ENCODE measurements at regions of chr1 and their contacts with region 1.

Region 1: GRCh38 chr1:171485375-171486047 is at the start of gene PRRC2C:
- DNase-seq: peak; percentile 95
- H3K4me3 Mint-ChIP-seq: peak within 1 kb of the TSS; percentile 92
- H3K27ac Mint-ChIP-seq: peak within 1 kb of the TSS; percentile 99
- H3K4me1 Mint-ChIP-seq: peaks cover 48% of the 10 kb centered on the region
- H3K27me3 Mint-ChIP-seq: no peaks in the 10 kb centered on the region
- total RNA-seq, gene PRRC2C: 188 to 202 TPM

Region 2: DNA sequence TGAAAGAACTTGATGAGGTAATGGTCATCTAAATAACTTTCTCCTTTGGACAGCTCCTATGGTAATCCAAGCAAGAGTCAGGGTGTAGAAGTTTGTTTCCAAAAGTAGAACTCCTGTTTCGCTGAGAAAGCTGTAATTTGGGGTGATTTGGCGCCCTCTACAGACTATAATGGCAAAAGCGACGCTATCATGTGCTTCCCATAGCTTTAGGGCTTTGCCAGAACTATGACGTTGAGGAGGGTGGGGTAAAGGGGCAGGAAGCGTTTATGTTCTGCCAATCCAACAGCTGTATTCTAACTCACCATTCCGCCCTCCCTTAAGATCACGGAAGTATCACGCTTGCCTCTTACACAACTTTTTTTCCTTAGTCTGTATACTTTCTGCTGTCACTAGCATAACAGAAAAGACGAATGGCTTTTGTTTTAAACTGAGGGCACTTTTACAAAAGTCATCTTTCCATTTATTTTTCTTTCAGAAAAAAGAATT is 171.6 kb before region 1 on chr1 and contains the start of gene FMO4:
- CTCF ChIA-PET with region 1: interaction called, 15 read pairs
- POLR2A ChIA-PET with region 1: interaction called, 13 read pairs
- DNase-seq: peak; percentile 85
- H3K4me3 Mint-ChIP-seq: peak within 1 kb of the TSS; percentile 66
- H3K27ac Mint-ChIP-seq: peak within 1 kb of the TSS; percentile 40
- H3K4me1 Mint-ChIP-seq: peaks cover 16% of the 10 kb centered on the region
- H3K27me3 Mint-ChIP-seq: no peaks in the 10 kb centered on the region
- total RNA-seq, gene FMO4: 1.2 to 1.8 TPM

Region 3: DNA sequence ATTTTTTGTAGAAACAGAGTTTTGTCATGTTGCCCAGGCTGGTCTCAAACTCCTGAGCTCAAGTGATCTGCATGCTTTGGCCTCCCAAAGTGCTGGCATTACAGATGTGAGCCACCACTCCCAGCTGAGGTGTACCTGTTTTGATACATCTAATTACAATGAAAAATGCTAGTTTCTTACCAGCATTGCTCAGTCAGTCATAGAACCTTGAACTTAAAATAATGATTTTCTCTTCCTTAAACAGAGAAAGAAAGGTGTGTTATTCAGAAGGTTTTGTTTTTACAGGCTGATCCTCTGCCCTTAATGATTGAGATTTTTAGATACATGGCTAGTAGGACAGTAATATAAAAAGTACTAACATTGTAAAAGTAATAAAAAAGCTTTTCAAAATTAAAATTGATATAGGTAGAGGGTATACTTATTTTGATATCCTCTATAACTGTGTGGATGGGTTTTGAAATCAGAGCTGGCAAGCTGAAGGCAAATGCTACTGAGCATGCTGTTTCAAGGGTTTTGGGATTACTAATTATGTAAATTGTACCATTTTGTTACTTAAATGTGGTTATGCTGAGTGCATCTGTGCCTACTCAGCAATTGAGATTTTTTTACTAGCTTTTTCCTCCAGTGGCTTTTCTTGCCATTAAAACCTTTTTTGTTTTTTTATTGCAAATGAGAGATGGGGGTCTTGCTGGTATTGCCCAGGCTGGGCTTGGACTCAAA is 16.0 kb after region 1 on chr1:
- CTCF ChIA-PET with region 1: interaction called, 32 read pairs
- POLR2A ChIA-PET with region 1: interaction called, 22 read pairs
- DNase-seq: no peak
- H3K4me3 Mint-ChIP-seq: no peak overlapping the region
- H3K27ac Mint-ChIP-seq: peak overlapping the region; percentile 10
- H3K4me1 Mint-ChIP-seq: peaks cover 77% of the 10 kb centered on the region
- H3K27me3 Mint-ChIP-seq: no peaks in the 10 kb centered on the region

Region 4: GRCh38 chr1:171515299-171515698 is 29.8 kb after region 1 on chr1:
- CTCF ChIA-PET with region 1: interaction called, 28 read pairs
- POLR2A ChIA-PET with region 1: interaction called, 37 read pairs
- DNase-seq: no peak
- H3K4me3 Mint-ChIP-seq: no peak overlapping the region
- H3K27ac Mint-ChIP-seq: peak overlapping the region; percentile 44
- H3K4me1 Mint-ChIP-seq: peaks cover 63% of the 10 kb centered on the region
- H3K27me3 Mint-ChIP-seq: no peaks in the 10 kb centered on the region

Region 5: DNA sequence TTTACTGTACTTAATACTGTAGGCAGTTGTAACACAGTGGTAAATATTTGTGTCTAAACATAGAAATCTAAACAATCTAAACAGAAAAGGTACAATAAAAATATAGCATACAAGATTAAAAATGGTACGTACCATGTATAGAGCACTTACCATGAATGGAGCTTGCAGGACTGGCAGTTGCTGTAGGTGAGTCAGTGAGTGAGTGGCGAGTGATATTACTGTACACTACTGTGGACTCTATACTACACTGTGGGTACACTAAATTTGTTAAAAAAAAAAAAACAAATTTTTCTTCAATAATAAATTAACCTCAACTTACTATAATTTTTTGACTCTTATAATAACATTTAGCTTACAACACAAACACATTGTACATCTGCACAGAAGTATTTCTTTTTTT is 97.1 kb after region 1 on chr1:
- CTCF ChIA-PET with region 1: interaction called, 12 read pairs
- POLR2A ChIA-PET with region 1: interaction called, 9 read pairs
- DNase-seq: no peak
- H3K4me3 Mint-ChIP-seq: no peak overlapping the region
- H3K27ac Mint-ChIP-seq: no peak overlapping the region
- H3K4me1 Mint-ChIP-seq: peaks cover 21% of the 10 kb centered on the region
- H3K27me3 Mint-ChIP-seq: no peaks in the 10 kb centered on the region